ENCODE measurements at regions of chr1 and their contacts with region 1.

Region 1: GRCh38 chr1:1959840-1960479 is 40.9 kb upstream of the TMEM52 start:
- DNase-seq: peak; percentile 81
- H3K4me3 ChIP-seq: no peak overlapping the region
- H3K27ac ChIP-seq: no peak overlapping the region
- H3K4me1 ChIP-seq: no peaks in the 10 kb centered on the region
- H3K27me3 ChIP-seq: no peaks in the 10 kb centered on the region
- CTCF ChIP-seq: peak; percentile 67

Region 2: GRCh38 chr1:2037314-2037979 is 77.5 kb after region 1 on chr1:
- intact Hi-C with region 1: loop called (anchors 5 kb)
- DNase-seq: no peak
- H3K4me3 ChIP-seq: no peak overlapping the region
- H3K27ac ChIP-seq: no peak overlapping the region
- H3K4me1 ChIP-seq: no peaks in the 10 kb centered on the region
- H3K27me3 ChIP-seq: no peaks in the 10 kb centered on the region
- CTCF ChIP-seq: no peak

Region 3: DNA sequence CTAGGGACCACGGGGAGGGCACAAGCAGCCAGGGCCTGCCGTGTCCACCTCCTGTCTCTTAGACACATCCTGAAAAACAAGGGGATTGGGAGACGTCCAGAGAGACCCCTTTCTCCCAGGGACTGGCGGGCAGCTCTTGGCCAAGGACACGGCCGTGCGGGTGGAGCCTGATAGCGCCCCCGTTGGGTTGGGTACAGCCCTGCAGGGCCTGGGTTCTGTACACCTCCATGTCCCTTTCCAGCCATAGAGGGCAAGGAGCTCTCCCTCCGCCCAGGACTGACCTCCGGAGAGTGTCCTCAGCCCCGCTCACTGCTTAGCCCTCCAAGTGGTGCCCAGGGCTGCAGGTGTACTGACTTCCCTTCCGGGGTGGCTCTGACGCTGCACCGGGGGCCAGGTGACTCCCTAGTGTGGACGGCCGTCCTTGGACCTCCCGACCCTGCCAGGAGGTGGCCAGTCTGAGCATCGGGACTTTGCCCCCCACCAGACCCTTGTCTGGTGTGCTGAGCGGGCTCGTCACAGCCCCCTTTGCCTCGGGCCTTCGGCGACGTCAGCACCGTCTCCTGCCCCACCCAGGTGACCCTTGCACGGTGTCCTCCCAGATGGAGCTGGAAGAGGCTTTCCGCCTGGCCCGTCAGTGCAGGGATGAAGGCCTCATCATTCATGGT is 96.1 kb after region 1 on chr1:
- intact Hi-C with region 1: no loop called
- DNase-seq: no peak
- H3K4me3 ChIP-seq: no peak overlapping the region
- H3K27ac ChIP-seq: no peak overlapping the region
- H3K4me1 ChIP-seq: peaks cover 4% of the 10 kb centered on the region
- H3K27me3 ChIP-seq: no peaks in the 10 kb centered on the region
- CTCF ChIP-seq: no peak

Region 4: GRCh38 chr1:2174348-2175054 is 214.5 kb after region 1 on chr1:
- intact Hi-C with region 1: loop called (anchors 10 kb)
- DNase-seq: peak; percentile 51
- H3K4me3 ChIP-seq: peak overlapping the region; percentile 2
- H3K27ac ChIP-seq: no peak overlapping the region
- H3K4me1 ChIP-seq: no peaks in the 10 kb centered on the region
- H3K27me3 ChIP-seq: no peaks in the 10 kb centered on the region
- CTCF ChIP-seq: peak; percentile 73